IMR-90 (cell line): ENCODE measurements at regions of chr3 and their contacts with region 1.

Region 1: GRCh38 chr3:191070201-191070600 is 128.8 kb upstream of the OSTN start:
- DNase-seq: peak; percentile 95
- ATAC-seq: peak; percentile 88
- H3K4me3 ChIP-seq: no peak overlapping the region
- H3K27ac ChIP-seq: peak overlapping the region; percentile 61; the same call in 1 of the 2 replicates
- H3K4me1 ChIP-seq: peaks cover 17% of the 10 kb centered on the region; the same call in 1 of the 2 replicates
- H3K27me3 ChIP-seq: no peaks in the 10 kb centered on the region
- CTCF ChIP-seq: no peak
- POLR2A ChIP-seq: no peak
- RAD21 ChIP-seq: no peak

Region 2: DNA sequence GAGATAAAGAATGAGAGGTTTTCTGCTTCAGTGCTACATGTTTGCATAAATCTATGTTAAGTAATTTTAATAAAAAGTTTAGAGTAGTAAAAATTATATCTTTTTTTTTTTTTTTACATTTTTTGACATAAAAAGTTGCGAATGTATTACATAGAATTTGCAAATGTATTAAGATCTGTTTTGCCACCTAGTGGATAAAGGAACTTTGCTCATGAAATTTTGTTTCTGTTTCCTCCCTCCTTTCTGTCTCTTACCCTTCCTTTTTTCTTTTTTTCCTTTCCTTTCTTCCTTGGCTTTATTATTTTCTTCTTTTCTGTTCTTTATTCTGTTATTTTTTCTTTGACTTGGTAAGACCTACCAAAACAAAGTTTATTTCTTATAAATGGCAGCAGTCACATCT is 318.6 kb after region 1 on chr3:
- CTCF ChIA-PET with region 1: no interaction called
- POLR2A ChIA-PET with region 1: no interaction called
- dilution Hi-C with region 1: no loop called
- in situ Hi-C with region 1: no loop called
- intact Hi-C with region 1: loop called (anchors 10 kb)
- DNase-seq: no peak
- ATAC-seq: no peak
- H3K4me3 ChIP-seq: no peak overlapping the region
- H3K27ac ChIP-seq: no peak overlapping the region
- H3K4me1 ChIP-seq: peaks cover 5% of the 10 kb centered on the region
- H3K27me3 ChIP-seq: no peaks in the 10 kb centered on the region
- CTCF ChIP-seq: peak; percentile 29; the same call in 1 of the 2 replicates
- POLR2A ChIP-seq: no peak
- RAD21 ChIP-seq: 0 out of 2 replicates have a peak, but pooled peaks have one; percentile 13